Heart right ventricle (tissue), 16 donors: ENCODE measurements at regions of chr11 and their contacts with region 1.

Region 1: GRCh38 chr11:128208329-128209137 is 378.8 kb downstream of the ETS1 start:
- DNase-seq: peak in 1 of 2 donors; percentile 80
- ATAC-seq: peak; percentile 76 to 91 (median 84)
- H3K4me3 ChIP-seq: no peak overlapping the region
- H3K27ac ChIP-seq: peak overlapping the region in 7 of 10 donors; percentile 28 to 71 (median 47)
- H3K4me1 ChIP-seq: peaks cover 2 to 41% (median 24%) of the 10 kb centered on the region in 9 donors
- H3K27me3 ChIP-seq: no peaks in the 10 kb centered on the region
- CTCF ChIP-seq: no peak

Region 2: DNA sequence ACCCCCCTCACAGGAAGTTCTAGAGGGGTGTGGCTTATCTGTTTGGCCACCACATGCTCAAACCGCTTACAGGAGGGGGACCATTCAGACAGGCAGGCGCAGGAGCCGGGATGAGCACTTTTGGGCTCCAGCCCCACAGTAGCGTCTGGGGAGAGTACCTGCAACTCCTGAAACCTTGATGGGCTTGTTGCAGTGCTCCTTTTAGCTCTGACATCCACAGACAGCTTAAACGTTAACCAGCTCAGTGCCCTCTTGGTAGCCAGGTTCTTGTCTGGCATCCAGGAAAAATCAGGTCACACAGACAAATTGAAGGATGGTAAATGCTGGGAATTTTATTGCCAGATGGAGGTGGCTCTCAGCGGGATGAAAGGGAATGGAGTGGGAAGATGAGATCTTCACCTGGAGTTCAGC is 52.5 kb after region 1 on chr11:
- intact Hi-C with region 1: loop called in 1 of 10 experiments (anchors 10 kb)
- DNase-seq: no peak
- ATAC-seq: no peak
- H3K4me3 ChIP-seq: no peak overlapping the region
- H3K27ac ChIP-seq: no peak overlapping the region
- H3K4me1 ChIP-seq: no peaks in the 10 kb centered on the region
- H3K27me3 ChIP-seq: no peaks in the 10 kb centered on the region
- CTCF ChIP-seq: no peak